ENCODE measurements at regions of chr2 and their contacts with region 1.

Region 1: DNA sequence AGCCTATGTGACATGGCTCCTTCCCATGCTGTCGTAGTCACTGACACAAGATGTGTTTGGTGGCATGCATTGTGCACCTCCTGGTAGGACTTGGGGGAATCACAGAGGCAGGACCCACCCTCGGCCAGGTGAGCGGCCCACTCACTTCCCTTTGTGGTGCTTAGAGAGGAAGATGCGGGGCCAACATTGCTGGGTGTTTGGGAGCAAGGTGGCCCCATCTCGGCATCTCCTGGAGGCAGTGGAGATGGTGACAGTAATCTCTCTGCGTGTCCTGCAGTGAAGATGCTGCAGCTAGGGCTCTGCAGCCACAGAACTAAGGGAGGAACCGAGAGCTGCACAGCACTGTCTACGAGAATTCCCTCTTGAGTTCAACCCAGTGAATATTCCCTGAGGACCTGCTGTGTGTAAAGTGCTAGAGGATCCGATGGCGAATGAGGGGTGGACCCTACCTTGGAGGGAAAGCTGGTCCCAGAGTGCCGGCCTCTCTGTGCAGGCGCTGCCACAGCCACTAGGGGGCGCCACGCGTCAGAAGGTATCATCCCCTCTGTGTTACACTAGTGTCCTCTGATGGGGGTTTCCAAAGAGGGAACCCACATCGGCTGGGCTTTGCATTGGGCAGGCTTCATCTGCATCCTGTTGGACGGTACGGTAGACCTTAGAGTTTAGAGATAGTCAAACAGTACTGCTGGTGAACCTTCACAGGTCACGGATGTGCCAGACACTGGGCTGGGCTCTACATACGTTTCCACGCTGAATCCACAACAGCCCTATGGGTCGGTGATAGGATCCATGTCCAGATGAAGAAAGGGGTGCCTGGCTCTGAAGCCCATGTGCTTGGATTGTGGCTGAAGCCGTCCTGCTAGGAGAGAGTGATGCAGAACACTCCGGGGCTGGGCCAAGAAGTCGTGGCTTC is 39.2 kb downstream of the COA5 start:
- DNase-seq: no peak
- H3K4me3 ChIP-seq: no peak overlapping the region
- H3K27me3 ChIP-seq: no peaks in the 10 kb centered on the region
- CTCF ChIP-seq: peak; percentile 83

Region 2: GRCh38 chr2:98532756-98533155 is 36.4 kb before region 1 on chr2:
- CTCF ChIA-PET with region 1: no interaction called
- POLR2A ChIA-PET with region 1: no interaction called
- DNase-seq: no peak
- H3K4me3 ChIP-seq: no peak overlapping the region
- H3K27me3 ChIP-seq: no peaks in the 10 kb centered on the region
- CTCF ChIP-seq: no peak

Region 3: GRCh38 chr2:98556344-98557033 is 12.6 kb before region 1 on chr2:
- CTCF ChIA-PET with region 1: interaction called, 11 read pairs
- POLR2A ChIA-PET with region 1: no interaction called
- DNase-seq: no peak
- H3K4me3 ChIP-seq: no peak overlapping the region
- H3K27me3 ChIP-seq: no peaks in the 10 kb centered on the region
- CTCF ChIP-seq: no peak

Region 4: DNA sequence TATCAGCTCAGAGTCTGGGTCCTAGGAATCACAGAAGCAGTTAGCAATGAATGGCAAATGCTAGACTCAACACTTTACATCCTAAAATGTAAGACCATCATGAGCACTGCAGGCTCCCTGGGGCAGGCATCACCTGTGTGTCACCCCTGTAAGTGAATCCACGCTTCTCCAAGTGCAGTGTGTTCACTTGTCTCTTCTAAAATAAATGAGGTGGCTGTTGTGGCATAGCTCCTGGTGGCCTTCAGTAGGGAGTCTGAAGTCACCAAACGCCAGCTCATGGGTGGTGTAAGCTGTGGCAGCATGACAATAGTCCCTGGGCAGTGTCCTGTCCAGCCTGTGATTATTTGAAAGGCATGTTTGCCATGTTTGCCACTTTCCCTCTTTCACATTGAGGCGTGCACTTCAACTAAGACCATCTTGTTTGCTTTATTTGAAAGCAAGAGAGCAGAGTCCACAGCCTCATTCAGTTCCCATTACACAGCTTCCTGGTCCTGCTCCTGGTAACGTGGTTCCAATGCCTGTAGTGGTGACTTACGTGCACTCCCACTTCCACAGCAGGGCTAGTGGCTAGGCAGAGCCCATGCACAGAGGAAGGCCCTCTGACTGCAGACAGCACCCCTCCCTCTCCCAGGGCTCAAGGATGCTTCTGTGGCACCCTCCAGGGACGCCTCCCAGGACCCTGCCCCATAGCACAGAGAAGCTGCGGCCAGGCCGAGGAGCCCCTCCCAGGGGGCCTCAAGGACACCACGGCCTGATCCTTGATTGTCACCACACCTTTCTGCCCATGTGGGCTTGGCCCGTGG is 14.9 kb after region 1 on chr2:
- CTCF ChIA-PET with region 1: interaction called, 10 read pairs
- POLR2A ChIA-PET with region 1: no interaction called
- DNase-seq: no peak
- H3K4me3 ChIP-seq: no peak overlapping the region
- H3K27me3 ChIP-seq: no peaks in the 10 kb centered on the region
- CTCF ChIP-seq: no peak